AG04449 (cell line): ENCODE measurements at regions of chr17 and their contacts with region 1.

Region 1: GRCh38 chr17:20226814-20227482 is 217.8 kb downstream of the SPECC1 start:
- DNase-seq: peak; percentile 45
- H3K4me3 ChIP-seq: no peak overlapping the region
- CTCF ChIP-seq: peak; percentile 85

Region 2: DNA sequence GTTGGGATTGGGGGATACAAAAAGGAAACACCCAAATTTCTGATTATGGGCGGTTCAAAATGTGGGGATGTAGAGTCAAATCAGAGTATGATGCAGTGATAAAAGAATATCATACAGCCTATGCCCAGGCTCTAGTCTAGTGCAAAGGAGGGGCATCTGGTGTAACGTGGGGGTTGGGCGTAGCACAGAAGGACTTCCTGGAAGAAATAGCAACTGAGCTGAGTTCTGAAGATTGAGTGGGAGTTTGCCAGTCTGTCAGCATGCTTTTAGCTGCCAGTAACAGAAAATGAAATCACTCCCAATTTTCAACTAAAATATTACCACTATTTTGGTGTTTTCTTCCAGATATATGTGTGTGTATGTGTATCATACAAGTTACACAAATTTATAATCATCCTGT is 20.9 kb before region 1 on chr17:
- CTCF ChIA-PET with region 1: no interaction called
- POLR2A ChIA-PET with region 1: no interaction called
- DNase-seq: no peak
- H3K4me3 ChIP-seq: no peak overlapping the region
- CTCF ChIP-seq: no peak

Region 3: GRCh38 chr17:20253323-20253722 is 26.4 kb after region 1 on chr17:
- CTCF ChIA-PET with region 1: no interaction called
- POLR2A ChIA-PET with region 1: no interaction called
- DNase-seq: no peak
- H3K4me3 ChIP-seq: no peak overlapping the region
- CTCF ChIP-seq: no peak

Region 4: DNA sequence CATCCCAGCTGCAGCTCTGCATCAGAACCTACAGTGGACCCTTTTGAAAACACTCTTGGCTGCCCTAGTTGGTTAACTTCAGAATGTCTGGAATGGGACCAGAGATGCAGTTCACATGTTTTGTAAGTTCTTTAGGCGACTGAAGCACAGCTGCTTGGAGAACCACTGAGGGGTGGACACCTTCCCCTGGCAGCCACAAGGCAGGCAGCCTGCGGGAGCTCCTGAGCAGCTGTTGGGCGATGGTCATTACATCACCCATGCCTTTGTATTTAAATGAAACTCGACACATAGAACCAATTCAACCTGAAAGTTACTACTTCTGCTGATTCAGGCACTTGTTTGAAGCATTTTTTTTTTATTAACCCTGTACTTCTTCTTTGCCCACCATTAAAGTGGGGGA is 88.9 kb after region 1 on chr17:
- CTCF ChIA-PET with region 1: interaction called, 11 read pairs
- POLR2A ChIA-PET with region 1: no interaction called
- DNase-seq: no peak
- H3K4me3 ChIP-seq: no peak overlapping the region
- CTCF ChIP-seq: no peak